PC-3 (cell line): ENCODE measurements at regions of chr1 and their contacts with region 1.

Region 1: GRCh38 chr1:231091831-231092301 is 51.8 kb upstream of the FAM89A start:
- DNase-seq: peak; percentile 72
- ATAC-seq: peak; percentile 71
- H3K4me3 ChIP-seq: no peak overlapping the region
- H3K27ac ChIP-seq: no peak overlapping the region
- H3K4me1 ChIP-seq: no peaks in the 10 kb centered on the region
- H3K27me3 ChIP-seq: peaks cover 78% of the 10 kb centered on the region
- CTCF ChIP-seq: peak; percentile 88

Region 2: DNA sequence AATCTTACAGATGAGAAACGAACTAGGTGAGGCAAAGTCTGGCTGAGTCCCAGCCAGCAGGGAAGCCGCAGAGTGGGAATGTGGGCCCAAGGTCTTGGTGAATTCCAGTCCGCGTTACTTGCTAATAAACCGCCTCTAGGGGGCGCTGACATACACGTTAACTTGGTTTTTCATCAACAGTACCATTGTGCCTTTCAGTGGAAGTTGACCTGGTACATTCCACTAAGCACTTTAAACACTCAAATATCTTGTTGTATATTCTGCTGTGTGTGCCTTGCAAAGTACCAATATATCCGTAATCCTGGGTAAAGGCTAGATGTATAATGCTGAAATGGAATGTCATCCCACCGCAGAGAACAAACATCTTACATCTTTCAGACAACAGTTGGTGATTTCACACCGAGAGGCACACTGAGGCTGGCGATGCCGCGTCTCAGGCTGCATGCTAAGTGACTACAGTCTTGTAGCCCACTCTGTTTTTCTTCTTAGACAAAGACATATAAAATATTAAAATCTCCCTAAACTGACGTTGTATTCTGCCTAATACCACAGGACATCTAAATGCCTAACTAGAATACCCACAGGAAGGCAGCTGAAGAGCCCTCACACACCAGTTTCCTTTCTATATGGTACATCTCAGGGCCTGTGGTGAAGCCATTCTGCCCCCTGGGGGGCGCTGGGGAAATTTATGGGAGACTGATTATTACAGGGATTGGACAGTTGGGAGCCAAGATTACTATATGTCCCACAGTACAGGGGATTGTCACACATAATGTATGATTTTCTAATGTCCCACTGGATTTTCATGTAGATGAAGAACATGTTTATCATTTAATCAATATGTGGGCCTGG is 174.4 kb before region 1 on chr1:
- CTCF ChIA-PET with region 1: no interaction called
- POLR2A ChIA-PET with region 1: no interaction called
- intact Hi-C with region 1: loop called (anchors 5 kb)
- DNase-seq: peak; percentile 88
- ATAC-seq: peak; percentile 78
- H3K4me3 ChIP-seq: no peak overlapping the region
- H3K27ac ChIP-seq: no peak overlapping the region
- H3K4me1 ChIP-seq: no peaks in the 10 kb centered on the region
- H3K27me3 ChIP-seq: no peaks in the 10 kb centered on the region
- CTCF ChIP-seq: peak; percentile 85

Region 3: GRCh38 chr1:231059566-231060193 is 32.2 kb before region 1 on chr1:
- CTCF ChIA-PET with region 1: no interaction called
- POLR2A ChIA-PET with region 1: no interaction called
- intact Hi-C with region 1: loop called (anchors 1 kb)
- DNase-seq: peak; percentile 67
- ATAC-seq: peak; percentile 40
- H3K4me3 ChIP-seq: no peak overlapping the region
- H3K27ac ChIP-seq: 0 out of 2 replicates have a peak overlapping the region, but pooled peaks have one; percentile 21
- H3K4me1 ChIP-seq: peaks cover 34% of the 10 kb centered on the region
- H3K27me3 ChIP-seq: no peaks in the 10 kb centered on the region
- CTCF ChIP-seq: no peak

Region 4: DNA sequence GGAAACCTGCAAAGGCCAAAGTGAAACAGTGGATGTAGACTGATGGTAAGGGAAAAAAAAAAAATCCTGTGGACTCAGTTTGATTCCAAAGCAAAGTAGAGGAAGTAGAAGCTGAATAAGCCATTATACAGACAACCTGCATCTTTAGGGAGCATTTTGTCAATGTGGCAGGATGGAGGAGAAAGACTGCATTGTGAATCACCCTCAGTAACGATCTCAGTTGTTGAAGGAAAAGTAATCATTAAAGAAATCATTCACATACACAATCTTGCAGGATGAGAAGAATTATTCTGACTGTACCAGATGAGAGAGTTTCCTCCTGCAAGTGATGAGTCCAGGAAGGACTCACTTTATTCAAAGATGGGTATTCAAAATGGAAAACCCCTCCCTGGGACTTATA is 24.9 kb after region 1 on chr1:
- CTCF ChIA-PET with region 1: no interaction called
- POLR2A ChIA-PET with region 1: no interaction called
- intact Hi-C with region 1: no loop called
- DNase-seq: no peak
- ATAC-seq: no peak
- H3K4me3 ChIP-seq: no peak overlapping the region
- H3K27ac ChIP-seq: no peak overlapping the region
- H3K4me1 ChIP-seq: no peaks in the 10 kb centered on the region
- H3K27me3 ChIP-seq: peaks cover 66% of the 10 kb centered on the region
- CTCF ChIP-seq: no peak